RWPE1 (cell line): ENCODE measurements at regions of chr10 and their contacts with region 1.

Region 1: GRCh38 chr10:133308421-133309110 is at the starts of genes TUBGCP2 and ZNF511:
- DNase-seq: peak; percentile 82
- H3K27ac ChIP-seq: peak within 1 kb of the TSS; percentile 92
- CTCF ChIP-seq: no peak

Region 2: GRCh38 chr10:133295426-133296320 is 12.9 kb before region 1 on chr10:
- CTCF ChIA-PET with region 1: interaction called, 14 read pairs
- POLR2A ChIA-PET with region 1: interaction called, 3 read pairs
- DNase-seq: no peak
- H3K27ac ChIP-seq: no peak overlapping the region; the same call in 1 of the 2 replicates
- CTCF ChIP-seq: no peak